A549 (cell line): ENCODE measurements at regions of chr17 and their contacts with region 1.

Region 1: DNA sequence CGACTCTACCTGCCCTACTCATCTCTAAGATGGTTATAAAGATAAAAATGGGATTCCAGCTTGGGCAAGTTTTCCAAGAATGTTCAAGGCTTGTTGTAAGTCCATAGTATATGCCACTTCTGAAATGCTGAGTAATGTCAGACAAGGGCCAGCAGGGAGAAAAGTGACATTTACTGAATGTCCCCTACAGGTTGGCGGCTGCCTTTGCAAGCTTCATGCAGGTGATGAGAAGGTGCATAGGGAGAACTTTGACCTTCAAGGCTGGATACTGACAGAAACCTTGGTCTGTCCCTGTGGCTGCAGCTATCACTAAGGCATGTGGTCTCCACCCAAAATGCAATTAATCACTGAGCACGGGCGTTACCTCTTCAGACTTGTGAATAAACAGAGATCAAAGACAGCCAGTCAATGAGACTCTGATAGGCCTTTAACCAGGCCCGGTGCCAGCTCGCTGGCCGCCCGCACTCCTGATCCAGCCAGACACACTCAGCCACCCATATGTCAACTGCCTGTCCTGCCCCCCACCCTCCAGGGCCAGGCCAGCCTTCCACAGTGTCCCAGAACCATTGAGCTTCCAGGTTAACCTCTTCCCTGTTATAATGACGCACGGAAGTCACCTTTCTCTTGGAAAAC is 26.8 kb upstream of the AXIN2 start:
- DNase-seq: peak; percentile 57 to 70
- ATAC-seq: peak; percentile 64 to 65; a peak in 5 of 6 replicates
- H3K4me3 ChIP-seq: no peak overlapping the region
- H3K27ac ChIP-seq: peak overlapping the region in 1 of 2 experiments; percentile 43; a peak in 3 of 6 replicates
- H3K4me1 ChIP-seq: peaks cover 35% of the 10 kb centered on the region
- CTCF ChIP-seq: no peak
- EP300 ChIP-seq: no peak
- POLR2A ChIP-seq: no peak
- RAD21 ChIP-seq: no peak

Region 2: DNA sequence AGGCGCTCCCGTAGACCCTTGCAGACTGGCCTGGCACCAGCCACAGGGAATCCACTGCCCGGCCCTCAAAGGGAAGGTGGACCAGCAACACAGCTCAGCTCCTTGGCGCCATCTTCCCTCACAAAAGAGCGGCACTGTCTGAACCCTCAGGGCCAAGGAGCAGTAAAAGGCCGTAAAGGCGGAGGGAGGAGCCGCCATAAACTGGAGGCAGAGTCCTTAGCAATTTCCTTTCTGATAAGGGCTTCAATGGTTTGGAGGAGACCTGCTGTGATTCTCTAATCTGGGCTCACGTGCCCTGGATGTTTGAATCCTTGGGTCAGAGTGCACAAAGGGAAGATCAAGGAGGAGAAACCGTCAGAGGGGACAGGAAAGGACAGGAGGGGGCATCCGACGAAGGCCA is 11.4 kb before region 1 on chr17:
- CTCF ChIA-PET with region 1: interaction called, 11 read pairs
- POLR2A ChIA-PET with region 1: no interaction called
- DNase-seq: no peak
- ATAC-seq: peak in 1 of 2 experiments; percentile 41; a peak in 2 of 6 replicates
- H3K4me3 ChIP-seq: no peak overlapping the region
- H3K27ac ChIP-seq: no peak overlapping the region
- H3K4me1 ChIP-seq: no peaks in the 10 kb centered on the region
- CTCF ChIP-seq: no peak
- EP300 ChIP-seq: no peak
- POLR2A ChIP-seq: no peak
- RAD21 ChIP-seq: no peak